SK-N-SH (cell line): ENCODE measurements at regions of chr1 and their contacts with region 1.

Region 1: GRCh38 chr1:210311726-210312493 is 16.8 kb upstream of the HHAT start:
- DNase-seq: no peak
- H3K4me3 ChIP-seq: peak overlapping the region; percentile 50 to 73; a peak in 2 of 4 replicates
- H3K27ac ChIP-seq: no peak overlapping the region
- H3K4me1 ChIP-seq: peaks cover 3 to 4% of the 10 kb centered on the region in 2 experiments; a peak in 2 of 4 replicates
- H3K27me3 ChIP-seq: no peaks in the 10 kb centered on the region
- CTCF ChIP-seq: no peak
- EP300 ChIP-seq: no peak
- RAD21 ChIP-seq: no peak

Region 2: GRCh38 chr1:209911746-209912145 is 400.2 kb before region 1 on chr1:
- CTCF ChIA-PET with region 1: no interaction called
- POLR2A ChIA-PET with region 1: no interaction called
- DNase-seq: no peak
- H3K4me3 ChIP-seq: no peak overlapping the region
- H3K27ac ChIP-seq: no peak overlapping the region
- H3K4me1 ChIP-seq: no peaks in the 10 kb centered on the region
- H3K27me3 ChIP-seq: no peaks in the 10 kb centered on the region
- CTCF ChIP-seq: no peak
- EP300 ChIP-seq: no peak
- RAD21 ChIP-seq: no peak

Region 3: GRCh38 chr1:210143465-210144062 is 168.3 kb before region 1 on chr1:
- CTCF ChIA-PET with region 1: interaction called, 106 read pairs
- POLR2A ChIA-PET with region 1: interaction called, 3 read pairs
- DNase-seq: peak; percentile 51
- H3K4me3 ChIP-seq: no peak overlapping the region; a peak in 1 of 4 replicates
- H3K27ac ChIP-seq: no peak overlapping the region
- H3K4me1 ChIP-seq: peaks cover 0 to 6% of the 10 kb centered on the region in 2 experiments; a peak in 1 of 4 replicates
- H3K27me3 ChIP-seq: no peaks in the 10 kb centered on the region
- CTCF ChIP-seq: peak; percentile 89
- EP300 ChIP-seq: no peak
- RAD21 ChIP-seq: peak; percentile 93

Region 4: DNA sequence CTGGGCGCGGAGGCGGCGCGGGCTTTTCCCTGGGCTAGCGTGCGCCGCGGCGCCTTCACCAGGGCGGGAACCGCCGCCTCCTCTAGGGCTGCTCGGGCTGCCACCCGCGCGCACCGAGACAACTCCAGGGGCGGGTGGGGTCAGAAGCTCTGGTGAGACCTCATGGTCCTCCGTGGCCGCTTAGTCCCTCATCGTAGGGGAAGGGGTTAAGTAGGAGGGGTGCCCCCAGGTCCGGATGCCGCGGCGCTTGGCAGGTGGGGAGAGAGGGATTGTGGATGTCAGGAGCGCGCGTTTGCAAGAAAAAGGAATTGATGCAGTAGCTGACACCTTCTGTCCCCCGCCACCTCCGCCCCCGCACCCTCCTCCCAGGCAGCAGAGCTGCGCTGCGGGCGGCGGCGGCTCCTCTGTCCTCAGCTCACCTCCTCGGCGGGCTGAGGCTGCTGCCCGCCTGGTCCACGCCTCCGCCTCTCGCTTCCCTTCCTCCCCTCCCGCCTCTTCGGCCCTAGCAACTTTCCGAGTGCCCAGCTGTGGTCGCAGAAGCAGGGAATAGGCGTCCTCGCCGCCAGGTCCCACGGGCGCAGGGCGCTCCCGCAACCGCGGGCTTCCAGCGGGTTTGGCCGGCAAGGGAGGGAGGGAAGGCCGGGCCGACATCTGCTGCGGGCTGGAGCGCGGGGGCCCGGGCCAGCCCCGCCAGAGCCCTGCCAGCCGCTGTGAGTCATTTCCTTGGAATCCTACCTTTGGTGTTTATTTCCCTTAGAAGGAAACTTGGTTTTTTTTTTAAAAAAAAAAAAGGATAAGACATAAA is 78.5 kb before region 1 on chr1:
- CTCF ChIA-PET with region 1: interaction called, 22 read pairs
- POLR2A ChIA-PET with region 1: interaction called, 4 read pairs
- DNase-seq: peak; percentile 78
- H3K4me3 ChIP-seq: peak overlapping the region; percentile 78 to 84
- H3K27ac ChIP-seq: peak overlapping the region; percentile 35 to 97
- H3K4me1 ChIP-seq: peaks cover 25 to 36% of the 10 kb centered on the region in 2 experiments
- H3K27me3 ChIP-seq: no peaks in the 10 kb centered on the region
- CTCF ChIP-seq: no peak
- EP300 ChIP-seq: peak in 1 of 2 experiments; percentile 75; a peak in 2 of 4 replicates
- RAD21 ChIP-seq: no peak

Region 5: GRCh38 chr1:210250998-210251679 is 60.8 kb before region 1 on chr1:
- CTCF ChIA-PET with region 1: interaction called, 11 read pairs
- POLR2A ChIA-PET with region 1: no interaction called
- DNase-seq: peak; percentile 93
- H3K4me3 ChIP-seq: peak overlapping the region; percentile 49 to 64
- H3K27ac ChIP-seq: peak overlapping the region in 1 of 2 experiments; percentile 83; a peak in 2 of 4 replicates
- H3K4me1 ChIP-seq: peaks cover 11 to 16% of the 10 kb centered on the region in 2 experiments; a peak in 3 of 4 replicates
- H3K27me3 ChIP-seq: no peaks in the 10 kb centered on the region
- CTCF ChIP-seq: no peak
- EP300 ChIP-seq: peak; percentile 44 to 48; a peak in 3 of 4 replicates
- RAD21 ChIP-seq: peak; percentile 7; the same call in 1 of the 2 replicates

Region 6: GRCh38 chr1:210301615-210302000 is 10.3 kb before region 1 on chr1:
- CTCF ChIA-PET with region 1: interaction called, 26 read pairs
- POLR2A ChIA-PET with region 1: no interaction called
- DNase-seq: no peak
- H3K4me3 ChIP-seq: no peak overlapping the region
- H3K27ac ChIP-seq: no peak overlapping the region
- H3K4me1 ChIP-seq: peaks cover 0 to 2% of the 10 kb centered on the region in 2 experiments; a peak in 1 of 4 replicates
- H3K27me3 ChIP-seq: no peaks in the 10 kb centered on the region
- CTCF ChIP-seq: no peak
- EP300 ChIP-seq: no peak
- RAD21 ChIP-seq: no peak